CD4-positive, alpha-beta memory T cell (primary cell): ENCODE measurements at regions of chr13 and their contacts with region 1.

Region 1: DNA sequence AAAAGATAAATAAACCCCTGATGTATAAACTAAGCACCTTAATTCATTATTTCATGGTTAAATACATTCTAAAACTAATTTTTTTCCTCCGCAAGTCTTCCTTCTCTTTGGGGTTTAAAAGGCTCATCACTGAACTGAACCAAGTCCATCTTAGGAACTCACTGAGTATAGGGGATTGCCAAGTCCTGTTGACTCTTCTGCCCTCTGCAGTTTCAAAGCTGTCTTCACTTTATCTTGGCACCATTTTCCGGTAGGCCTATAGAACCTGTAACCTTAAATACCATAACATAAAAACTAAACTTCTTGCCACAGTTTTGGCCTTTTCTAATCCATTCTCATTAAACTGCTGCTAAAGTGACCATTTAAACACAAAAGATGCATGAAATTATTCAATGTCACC is 66.5 kb upstream of the USPL1 start:
- DNase-seq: peak in 4 of 5 donors; percentile 19 to 21 (median 20)
- H3K4me3 ChIP-seq: no peak overlapping the region
- H3K4me3 Mint-ChIP-seq: no peak overlapping the region
- H3K27ac ChIP-seq: no peak overlapping the region
- H3K27ac Mint-ChIP-seq: no peak overlapping the region
- H3K4me1 ChIP-seq: no peaks in the 10 kb centered on the region
- H3K4me1 Mint-ChIP-seq: peaks cover 0 to 3% (median under 1%) of the 10 kb centered on the region in 4 donors
- H3K27me3 ChIP-seq: no peaks in the 10 kb centered on the region
- H3K27me3 Mint-ChIP-seq: no peaks in the 10 kb centered on the region

Region 2: GRCh38 chr13:30255696-30256095 is 295.5 kb before region 1 on chr13:
- CTCF ChIA-PET with region 1: no interaction called
- POLR2A ChIA-PET with region 1: no interaction called
- intact Hi-C with region 1: loop called (anchors 1 kb)
- DNase-seq: peak in 3 of 5 donors; percentile 6 to 14 (median 9)
- H3K4me3 ChIP-seq: no peak overlapping the region
- H3K4me3 Mint-ChIP-seq: no peak overlapping the region
- H3K27ac ChIP-seq: no peak overlapping the region
- H3K27ac Mint-ChIP-seq: no peak overlapping the region
- H3K4me1 ChIP-seq: no peaks in the 10 kb centered on the region
- H3K4me1 Mint-ChIP-seq: peaks cover 4 to 21% (median 11%) of the 10 kb centered on the region in 4 donors
- H3K27me3 ChIP-seq: no peaks in the 10 kb centered on the region
- H3K27me3 Mint-ChIP-seq: no peaks in the 10 kb centered on the region